PC-3 (cell line): ENCODE measurements at regions of chr2 and their contacts with region 1.

Region 1: GRCh38 chr2:237714690-237715458 is 83.7 kb upstream of the RBM44 start:
- DNase-seq: peak; percentile 23
- ATAC-seq: peak; percentile 86
- H3K4me3 ChIP-seq: no peak overlapping the region
- H3K27ac ChIP-seq: no peak overlapping the region
- H3K4me1 ChIP-seq: no peaks in the 10 kb centered on the region
- H3K27me3 ChIP-seq: no peaks in the 10 kb centered on the region
- CTCF ChIP-seq: no peak

Region 2: DNA sequence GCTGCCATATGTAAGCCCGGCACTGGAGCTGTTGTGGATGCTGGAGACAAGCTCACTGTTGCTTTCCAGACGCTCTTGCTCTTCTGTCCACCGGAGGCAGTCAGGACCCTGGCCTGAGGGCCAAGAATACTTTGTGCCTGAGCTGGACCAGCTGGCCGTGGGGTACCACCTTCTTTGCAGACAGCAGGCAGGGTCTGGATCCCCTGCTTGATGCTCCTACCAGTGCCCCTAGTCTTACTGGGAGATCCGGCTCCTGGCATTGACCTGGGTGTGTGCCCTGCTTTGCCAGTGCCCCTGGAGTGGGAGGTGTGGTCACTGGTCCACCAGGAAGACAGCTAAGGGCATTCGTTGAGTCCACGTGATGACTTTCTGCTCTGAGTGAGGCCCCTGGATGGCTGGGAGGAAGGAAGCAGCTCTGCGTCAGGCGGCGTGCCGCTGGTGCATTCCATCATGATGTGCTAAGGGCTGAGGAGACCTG is 28.2 kb before region 1 on chr2:
- CTCF ChIA-PET with region 1: interaction called, 3 read pairs
- POLR2A ChIA-PET with region 1: interaction called, 16 read pairs
- intact Hi-C with region 1: no loop called
- DNase-seq: no peak
- ATAC-seq: no peak
- H3K4me3 ChIP-seq: no peak overlapping the region
- H3K27ac ChIP-seq: no peak overlapping the region
- H3K4me1 ChIP-seq: peaks cover 42% of the 10 kb centered on the region
- H3K27me3 ChIP-seq: no peaks in the 10 kb centered on the region
- CTCF ChIP-seq: peak; percentile 49

Region 3: DNA sequence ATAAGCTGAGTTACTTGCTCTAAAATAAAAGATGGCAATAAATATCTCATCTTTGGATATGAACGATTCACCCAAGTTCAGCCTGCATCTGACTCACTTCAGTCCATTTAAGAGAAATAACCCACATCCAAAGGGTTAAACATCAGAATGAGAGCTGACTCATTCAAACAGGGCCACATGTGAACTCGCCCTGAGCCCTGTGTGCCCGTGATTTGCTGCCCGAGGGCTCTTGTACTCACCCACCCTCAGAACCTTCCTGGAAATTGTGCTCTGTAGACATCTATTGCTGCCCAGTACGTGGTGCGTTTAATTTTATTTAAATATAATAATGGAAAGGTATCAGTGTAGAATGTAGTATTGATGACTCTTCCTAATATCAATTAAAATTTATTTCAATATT is 16.8 kb after region 1 on chr2:
- CTCF ChIA-PET with region 1: no interaction called
- POLR2A ChIA-PET with region 1: interaction called, 3 read pairs
- intact Hi-C with region 1: loop called (anchors 2 kb)
- DNase-seq: peak; percentile 73
- ATAC-seq: peak; percentile 62
- H3K4me3 ChIP-seq: no peak overlapping the region
- H3K27ac ChIP-seq: no peak overlapping the region
- H3K4me1 ChIP-seq: peaks cover 27% of the 10 kb centered on the region
- H3K27me3 ChIP-seq: no peaks in the 10 kb centered on the region
- CTCF ChIP-seq: no peak